Activated CD4-positive, alpha-beta T cell treated with anti-CD3 and anti-CD28 coated beads for 36 hours (primary cell): ENCODE measurements at regions of chr1 and their contacts with region 1.

Region 1: DNA sequence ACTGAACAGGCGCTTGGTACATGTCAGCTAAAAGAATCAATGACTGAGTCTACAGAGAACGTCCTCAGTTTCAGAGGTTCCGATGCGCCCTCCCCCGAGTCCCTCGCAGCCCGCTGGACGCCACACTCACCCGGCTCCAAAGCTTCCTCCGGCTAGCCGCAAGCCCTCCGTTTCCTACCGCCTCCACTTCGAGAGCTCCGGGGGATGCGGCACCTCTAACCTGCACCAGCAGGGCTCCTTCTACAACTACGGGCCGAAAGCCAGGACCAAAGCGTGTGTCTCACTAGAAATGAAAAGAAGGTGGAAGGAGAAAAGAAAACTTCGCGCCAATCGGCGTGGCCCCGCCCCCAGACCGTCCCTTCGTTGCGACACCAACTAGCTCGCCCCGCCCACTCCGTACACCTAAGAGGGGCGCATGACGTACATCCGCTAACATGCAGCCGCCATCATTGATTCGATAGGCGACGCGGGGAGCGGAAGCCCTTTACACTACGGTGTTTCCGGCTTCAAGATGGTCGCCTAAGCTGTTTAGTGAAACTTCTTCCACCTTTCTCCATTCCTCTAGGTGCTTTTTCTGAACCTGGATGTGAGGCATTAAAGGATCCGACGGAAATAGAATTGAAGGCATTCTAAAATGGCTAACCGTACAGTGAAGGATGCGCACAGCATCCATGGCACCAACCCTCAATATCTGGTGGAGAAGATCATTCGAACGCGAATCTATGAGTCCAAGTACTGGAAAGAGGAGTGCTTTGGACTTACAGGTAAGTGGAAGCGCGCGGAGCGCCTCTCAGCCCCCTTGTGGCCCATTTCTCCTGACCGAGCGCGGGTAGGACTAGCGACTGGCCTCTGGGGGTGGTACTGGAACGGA is at the starts of genes ORC1 and PRPF38A:
- DNase-seq: peak; percentile 99
- ATAC-seq: peak; percentile 92
- H3K4me3 Mint-ChIP-seq: peak within 1 kb of the TSS; percentile 98
- H3K27ac Mint-ChIP-seq: peak within 1 kb of the TSS; percentile 99
- H3K4me1 Mint-ChIP-seq: peaks cover 45% of the 10 kb centered on the region
- H3K27me3 Mint-ChIP-seq: no peaks in the 10 kb centered on the region
- total RNA-seq, gene ORC1: 51.0 to 57.9 TPM
- total RNA-seq, gene PRPF38A: 88.9 to 103 TPM

Region 2: DNA sequence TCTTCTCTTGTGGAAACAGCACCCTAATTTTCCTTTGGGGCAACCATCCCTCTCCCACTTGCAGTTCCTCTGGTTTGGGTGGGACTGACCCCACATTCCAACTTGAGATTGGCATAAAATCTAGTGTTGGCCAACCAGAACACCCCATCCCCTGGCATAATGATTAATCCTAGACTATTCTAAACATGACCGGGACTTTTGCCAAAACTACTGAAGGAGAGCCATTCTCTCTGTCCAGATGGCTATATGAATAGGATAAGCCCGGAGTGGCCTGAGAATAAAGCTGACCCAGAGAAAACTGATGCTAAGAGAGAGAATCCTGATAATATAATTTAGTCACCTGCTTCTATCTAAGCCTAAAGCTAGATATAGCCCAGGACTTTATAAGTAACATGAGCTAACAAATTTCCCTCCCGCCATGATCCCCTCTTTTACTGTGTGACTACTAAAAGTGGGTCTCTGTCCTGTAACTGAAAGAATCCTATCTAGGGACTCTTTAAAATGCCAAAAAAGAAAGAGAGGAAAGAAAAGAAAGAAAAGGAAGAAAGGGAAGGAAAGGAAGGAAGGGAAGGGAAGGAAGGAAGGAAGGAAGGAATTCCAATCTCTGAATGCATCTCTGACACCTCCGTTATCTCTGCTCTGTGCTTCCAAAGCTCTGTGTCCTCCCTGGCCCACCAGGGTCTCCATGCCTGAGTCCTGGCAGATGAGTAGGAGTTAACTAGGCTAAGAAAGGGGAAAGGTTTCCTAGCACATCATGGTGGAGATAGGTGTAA is 497.9 kb before region 1 on chr1:
- CTCF ChIA-PET with region 1: no interaction called
- POLR2A ChIA-PET with region 1: no interaction called
- intact Hi-C with region 1: no loop called
- DNase-seq: no peak
- ATAC-seq: no peak
- H3K4me3 Mint-ChIP-seq: no peak overlapping the region
- H3K27ac Mint-ChIP-seq: no peak overlapping the region
- H3K4me1 Mint-ChIP-seq: no peaks in the 10 kb centered on the region
- H3K27me3 Mint-ChIP-seq: peaks cover 8% of the 10 kb centered on the region

Region 3: DNA sequence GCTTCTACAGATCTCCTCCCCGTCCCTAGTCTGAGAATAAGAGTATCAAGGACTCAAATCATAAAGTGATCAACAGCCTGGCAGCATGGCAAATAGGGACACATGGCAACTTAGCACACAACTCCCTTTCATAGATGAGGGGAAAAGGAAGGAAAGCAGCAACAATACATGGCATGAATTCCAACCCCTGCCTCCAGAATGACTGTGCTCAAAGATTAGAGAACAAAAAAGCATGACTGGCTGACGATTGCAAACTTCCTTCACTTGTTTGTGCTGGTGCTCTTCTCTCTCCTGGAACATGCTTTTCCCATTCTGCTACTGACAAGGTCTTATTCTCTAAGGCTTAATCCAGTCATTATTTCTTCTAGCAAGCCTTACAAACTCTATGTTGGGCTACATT is 382.2 kb before region 1 on chr1:
- CTCF ChIA-PET with region 1: no interaction called
- POLR2A ChIA-PET with region 1: interaction called, 10 read pairs
- intact Hi-C with region 1: no loop called
- DNase-seq: no peak
- ATAC-seq: no peak
- H3K4me3 Mint-ChIP-seq: no peak overlapping the region
- H3K27ac Mint-ChIP-seq: no peak overlapping the region
- H3K4me1 Mint-ChIP-seq: no peaks in the 10 kb centered on the region
- H3K27me3 Mint-ChIP-seq: no peaks in the 10 kb centered on the region

Region 4: DNA sequence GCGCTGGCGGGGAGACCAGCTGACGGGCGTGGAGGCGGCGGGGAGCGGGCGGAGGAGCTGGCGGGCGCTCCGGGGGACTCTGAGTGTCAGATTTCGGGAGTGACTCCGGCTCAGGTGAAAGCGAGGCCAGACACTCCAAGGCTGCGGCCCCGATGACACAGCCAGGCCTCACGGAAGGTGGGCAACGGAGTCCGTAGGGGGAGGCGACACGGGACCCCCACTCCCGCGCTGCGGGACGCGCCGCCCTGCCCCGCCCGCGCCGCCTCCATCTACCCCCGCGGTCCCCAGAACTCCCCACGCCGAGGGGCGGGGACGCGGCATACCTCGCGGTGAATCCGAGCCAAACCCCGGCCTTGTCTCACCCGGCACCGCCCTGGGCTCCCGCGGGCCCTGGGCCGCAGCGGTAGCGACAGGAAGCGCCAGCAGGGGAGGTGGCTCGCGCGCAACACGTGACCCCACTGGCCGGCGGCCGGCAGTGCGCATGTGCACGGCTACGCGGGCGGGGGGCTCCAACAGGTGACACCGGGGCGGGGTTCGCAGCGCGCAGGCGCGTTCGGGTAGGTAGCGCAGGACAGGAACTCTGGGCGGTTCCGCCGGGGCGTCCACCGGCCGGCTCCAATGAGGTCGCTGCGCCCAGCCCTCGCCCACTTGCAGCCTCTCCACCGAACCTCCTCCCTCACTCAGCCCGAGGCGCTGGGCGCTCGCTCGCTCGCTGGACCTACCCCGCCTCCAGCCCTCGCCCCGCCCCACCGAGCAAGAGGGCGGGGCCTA is 38.4 kb before region 1 on chr1 and contains the start of gene CC2D1B:
- CTCF ChIA-PET with region 1: interaction called, 11 read pairs
- POLR2A ChIA-PET with region 1: interaction called, 10 read pairs
- intact Hi-C with region 1: loop called (anchors 1 kb)
- DNase-seq: peak; percentile 99
- ATAC-seq: peak; percentile 94
- H3K4me3 Mint-ChIP-seq: peak within 1 kb of the TSS; percentile 94
- H3K27ac Mint-ChIP-seq: peak within 1 kb of the TSS; percentile 93
- H3K4me1 Mint-ChIP-seq: peaks cover 44% of the 10 kb centered on the region
- H3K27me3 Mint-ChIP-seq: no peaks in the 10 kb centered on the region
- total RNA-seq, gene CC2D1B: 22.6 to 25.3 TPM

Region 5: DNA sequence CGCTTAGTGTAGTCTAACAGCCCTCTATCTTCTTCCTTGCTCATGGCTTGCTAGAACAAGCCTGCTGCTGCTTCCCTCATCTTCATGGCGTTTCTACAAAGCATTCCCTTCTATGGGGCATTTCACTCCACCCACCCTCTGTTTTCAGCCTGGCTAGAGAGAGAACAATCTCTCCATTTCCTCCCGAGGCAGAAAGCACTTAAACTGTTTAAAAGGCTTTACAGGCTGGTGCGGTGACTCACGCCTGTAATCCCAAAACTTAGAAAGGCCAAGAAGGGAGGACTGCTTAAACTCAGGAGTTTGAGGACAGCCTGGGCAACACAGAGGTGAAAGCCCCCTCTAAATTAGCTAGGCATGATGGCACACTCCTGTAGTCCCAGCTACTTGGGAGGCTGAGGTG is 17.9 kb before region 1 on chr1:
- CTCF ChIA-PET with region 1: no interaction called
- POLR2A ChIA-PET with region 1: no interaction called
- intact Hi-C with region 1: no loop called
- DNase-seq: no peak
- ATAC-seq: no peak
- H3K4me3 Mint-ChIP-seq: no peak overlapping the region
- H3K27ac Mint-ChIP-seq: no peak overlapping the region
- H3K4me1 Mint-ChIP-seq: no peaks in the 10 kb centered on the region
- H3K27me3 Mint-ChIP-seq: no peaks in the 10 kb centered on the region

Region 6: GRCh38 chr1:52552505-52553361 is 148.4 kb after region 1 on chr1 and contains the start of gene TUT4:
- CTCF ChIA-PET with region 1: interaction called, 3 read pairs
- POLR2A ChIA-PET with region 1: interaction called, 18 read pairs
- intact Hi-C with region 1: loop called (anchors 1 to 5 kb)
- DNase-seq: peak; percentile 90
- ATAC-seq: peak; percentile 57
- H3K4me3 Mint-ChIP-seq: no peak within 1 kb of the TSS
- H3K27ac Mint-ChIP-seq: peak within 1 kb of the TSS; percentile 84
- H3K4me1 Mint-ChIP-seq: peaks cover 34% of the 10 kb centered on the region
- H3K27me3 Mint-ChIP-seq: no peaks in the 10 kb centered on the region
- total RNA-seq, gene TUT4: 61.6 to 71.7 TPM

Region 7: DNA sequence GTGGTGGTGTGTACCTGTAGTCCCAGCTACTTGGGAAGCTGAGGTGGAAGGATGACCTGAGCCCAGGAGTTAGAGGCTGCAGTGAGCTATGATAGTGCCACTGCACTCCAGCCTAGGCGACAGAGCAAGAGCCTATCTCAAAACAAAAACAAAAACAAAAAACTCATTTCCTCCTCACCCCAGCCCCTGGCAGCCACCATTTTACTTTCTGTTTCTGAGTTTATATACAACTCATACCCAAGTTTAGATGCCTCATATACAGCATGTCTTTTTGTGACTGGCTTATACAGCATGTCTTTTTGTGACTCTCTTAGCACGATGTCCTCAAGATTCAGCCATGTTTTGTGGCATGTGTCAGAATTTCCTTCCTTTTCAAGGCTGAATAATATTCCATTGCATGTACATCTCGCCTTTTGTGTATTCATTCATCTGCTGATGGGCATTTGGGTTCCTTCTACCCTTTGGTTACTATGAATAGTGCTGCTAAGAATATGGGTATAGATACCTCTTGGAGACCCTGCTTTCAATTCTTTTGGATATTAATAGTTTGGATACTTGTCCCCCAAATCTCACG is 279.1 kb after region 1 on chr1:
- CTCF ChIA-PET with region 1: interaction called, 13 read pairs
- POLR2A ChIA-PET with region 1: interaction called, 4 read pairs
- intact Hi-C with region 1: loop called (anchors 1 to 5 kb)
- DNase-seq: no peak
- ATAC-seq: peak; percentile 37
- H3K4me3 Mint-ChIP-seq: no peak overlapping the region
- H3K27ac Mint-ChIP-seq: no peak overlapping the region
- H3K4me1 Mint-ChIP-seq: peaks cover 8% of the 10 kb centered on the region
- H3K27me3 Mint-ChIP-seq: no peaks in the 10 kb centered on the region

Region 8: GRCh38 chr1:52976183-52977035 is 572.1 kb after region 1 on chr1:
- CTCF ChIA-PET with region 1: no interaction called
- POLR2A ChIA-PET with region 1: no interaction called
- intact Hi-C with region 1: no loop called
- DNase-seq: no peak
- ATAC-seq: no peak
- H3K4me3 Mint-ChIP-seq: no peak overlapping the region
- H3K27ac Mint-ChIP-seq: no peak overlapping the region
- H3K4me1 Mint-ChIP-seq: no peaks in the 10 kb centered on the region
- H3K27me3 Mint-ChIP-seq: no peaks in the 10 kb centered on the region

Region 9: GRCh38 chr1:53014791-53015507 is 610.6 kb after region 1 on chr1:
- CTCF ChIA-PET with region 1: no interaction called
- POLR2A ChIA-PET with region 1: no interaction called
- intact Hi-C with region 1: loop called in 1 of 2 experiments (anchors 1 kb)
- DNase-seq: peak; percentile 84
- ATAC-seq: peak; percentile 99
- H3K4me3 Mint-ChIP-seq: peak overlapping the region; percentile 79
- H3K27ac Mint-ChIP-seq: peak overlapping the region; percentile 89
- H3K4me1 Mint-ChIP-seq: peaks cover 24% of the 10 kb centered on the region
- H3K27me3 Mint-ChIP-seq: no peaks in the 10 kb centered on the region

Region 10: GRCh38 chr1:53238197-53239155 is 834.1 kb after region 1 on chr1 and contains the start of gene MAGOH:
- CTCF ChIA-PET with region 1: no interaction called
- POLR2A ChIA-PET with region 1: no interaction called
- intact Hi-C with region 1: loop called in 1 of 2 experiments (anchors 1 kb)
- DNase-seq: peak; percentile 95
- ATAC-seq: peak; percentile 98
- H3K4me3 Mint-ChIP-seq: peak within 1 kb of the TSS; percentile 96
- H3K27ac Mint-ChIP-seq: peak within 1 kb of the TSS; percentile 93
- H3K4me1 Mint-ChIP-seq: peaks cover 24% of the 10 kb centered on the region
- H3K27me3 Mint-ChIP-seq: no peaks in the 10 kb centered on the region
- total RNA-seq, gene MAGOH: 73.7 to 92.3 TPM